ENCODE measurements at regions of chr2 and their contacts with region 1.

Region 1: GRCh38 chr2:60674524-60675165 is 81.4 kb upstream of the PAPOLG start:
- DNase-seq: peak; percentile 88

Region 2: DNA sequence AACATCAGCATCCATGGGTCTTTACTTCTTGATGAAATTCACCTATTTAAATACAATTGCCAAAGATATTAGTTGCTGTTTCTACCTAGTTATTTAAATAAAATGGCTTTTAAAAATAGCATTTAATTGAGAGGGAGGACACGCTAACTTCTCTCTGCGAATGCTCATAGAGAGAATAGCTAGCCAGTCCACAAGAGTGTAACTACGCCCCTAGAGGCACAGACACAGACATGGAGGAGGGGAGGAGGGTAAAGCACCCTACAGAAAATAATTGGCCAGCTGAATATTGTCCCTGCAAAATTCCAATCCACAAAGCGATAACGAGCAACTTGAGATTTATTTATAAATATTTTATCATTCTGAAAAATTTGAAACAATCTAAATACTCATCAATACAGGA is 15.6 kb before region 1 on chr2:
- CTCF ChIA-PET with region 1: interaction called, 10 read pairs
- POLR2A ChIA-PET with region 1: no interaction called
- DNase-seq: no peak

Measured in HEK293T (cell line).